Dorsolateral prefrontal cortex (tissue), 120 donors: ENCODE measurements at regions of chr11 and their contacts with region 1.

Region 1: DNA sequence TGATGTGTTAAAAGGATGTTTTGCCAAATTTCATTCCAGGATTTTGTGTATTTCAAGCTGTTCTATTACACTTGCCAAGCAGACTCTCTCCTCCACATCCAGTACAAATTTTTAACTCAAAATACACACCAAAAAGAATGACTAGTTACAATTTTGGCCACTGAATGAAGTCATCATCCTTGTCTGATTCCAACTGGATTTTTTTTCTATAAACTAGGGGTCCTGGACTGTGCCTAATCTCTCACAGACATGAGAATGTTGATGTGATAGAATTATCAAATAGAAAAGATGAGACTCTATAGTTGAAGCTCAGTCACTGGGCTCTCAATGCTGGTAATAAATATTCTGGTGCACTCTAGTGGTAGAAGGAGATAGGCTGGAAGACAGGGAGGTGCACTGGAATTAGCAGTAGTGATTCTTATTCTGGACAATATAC is 85.8 kb downstream of the FANCF start:
- DNase-seq: no peak
- H3K4me3 ChIP-seq: no peak overlapping the region
- H3K27ac ChIP-seq: no peak overlapping the region
- H3K27me3 ChIP-seq: peaks cover 0 to 9% (median 0%) of the 10 kb centered on the region in 45 donors
- CTCF ChIP-seq: peak; percentile 26 to 72 (median 53)

Region 2: GRCh38 chr11:22343371-22344032 is 196.3 kb before region 1 on chr11:
- intact Hi-C with region 1: loop called (anchors 10 kb)
- DNase-seq: no peak
- H3K4me3 ChIP-seq: peak overlapping the region in 1 of 59 donors; percentile 10
- H3K27ac ChIP-seq: no peak overlapping the region
- H3K27me3 ChIP-seq: peaks cover 0 to 92% (median 50%) of the 10 kb centered on the region in 45 donors
- CTCF ChIP-seq: no peak

Region 3: GRCh38 chr11:22558664-22559063 is 18.8 kb after region 1 on chr11:
- intact Hi-C with region 1: no loop called
- DNase-seq: no peak
- H3K4me3 ChIP-seq: peak overlapping the region in 7 of 59 donors; percentile 2 to 40 (median 7)
- H3K27ac ChIP-seq: no peak overlapping the region
- H3K27me3 ChIP-seq: no peaks in the 10 kb centered on the region
- CTCF ChIP-seq: no peak